Ascending aorta (tissue), 2 donors: ENCODE measurements at regions of chr17 and their contacts with region 1.

Region 1: DNA sequence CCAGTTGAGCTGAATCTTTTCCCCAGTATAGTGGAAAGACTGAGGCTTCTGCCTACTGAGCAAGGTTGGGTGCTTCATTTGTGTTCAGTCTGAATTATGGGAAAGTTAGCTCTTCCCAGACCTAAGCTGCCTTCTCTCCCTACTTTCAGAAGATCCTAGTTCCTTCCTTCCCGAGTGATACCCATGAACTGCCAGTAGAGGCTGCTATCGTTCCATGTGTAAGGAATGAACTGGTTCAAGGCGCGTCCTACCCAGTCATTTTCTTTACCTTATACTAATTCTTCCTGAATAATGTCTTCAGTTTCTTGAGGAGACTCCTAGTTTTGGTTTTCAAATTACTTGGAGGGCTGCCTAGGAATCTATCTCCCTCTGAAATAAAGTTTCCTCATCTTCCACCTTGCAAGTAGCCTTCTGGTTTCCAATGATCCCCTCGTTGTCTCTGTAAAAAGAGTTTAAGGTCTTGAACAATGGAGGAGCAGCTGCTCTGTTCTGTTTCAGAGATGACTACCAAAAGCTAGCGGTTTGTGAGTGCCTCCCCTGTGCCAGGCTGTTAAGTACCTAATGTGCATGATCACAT is 934 bp upstream of the AOC2 start:
- DNase-seq: no peak
- H3K4me3 ChIP-seq: no peak overlapping the region
- H3K27ac ChIP-seq: peak overlapping the region in 1 of 2 donors; percentile 17
- H3K4me1 ChIP-seq: no peaks in the 10 kb centered on the region
- H3K27me3 ChIP-seq: no peaks in the 10 kb centered on the region
- CTCF ChIP-seq: peak; percentile 93 to 96 (median 95)

Region 2: GRCh38 chr17:42779936-42780850 is 63.3 kb before region 1 on chr17 and contains the start of gene WNK4:
- intact Hi-C with region 1: no loop called
- DNase-seq: no peak
- H3K4me3 ChIP-seq: peak within 1 kb of the TSS; percentile 45 to 47
- H3K27ac ChIP-seq: no peak within 1 kb of the TSS
- H3K4me1 ChIP-seq: peaks cover 6% of the 10 kb centered on the region in 2 donors
- H3K27me3 ChIP-seq: peaks cover 12% of the 10 kb centered on the region
- CTCF ChIP-seq: no peak
- total RNA-seq, gene WNK4: not detected

Region 3: DNA sequence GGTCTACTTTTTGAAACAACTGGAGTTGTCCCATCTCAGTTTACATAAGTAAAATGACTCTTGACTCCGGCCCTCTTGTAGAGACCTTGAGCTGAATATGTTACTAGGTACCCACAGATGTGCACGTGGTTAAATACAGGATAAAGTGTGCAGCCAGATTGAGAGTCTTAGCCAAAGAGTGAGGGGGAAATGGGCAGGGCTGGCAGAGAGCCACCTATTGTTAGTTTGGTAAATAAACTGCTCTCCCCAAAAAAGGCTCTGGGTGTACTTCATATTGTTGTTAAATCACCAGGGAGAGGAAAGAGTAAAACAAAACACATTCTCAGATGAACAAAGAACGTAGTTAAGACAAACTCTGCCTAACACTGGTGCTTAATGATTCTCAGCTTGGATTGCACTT is 77.5 kb after region 1 on chr17:
- intact Hi-C with region 1: no loop called
- DNase-seq: no peak
- H3K4me3 ChIP-seq: no peak overlapping the region
- H3K27ac ChIP-seq: no peak overlapping the region
- H3K4me1 ChIP-seq: peaks cover 0 to 9% of the 10 kb centered on the region in 2 donors
- H3K27me3 ChIP-seq: no peaks in the 10 kb centered on the region
- CTCF ChIP-seq: no peak

Region 4: GRCh38 chr17:42937712-42938596 is 94.5 kb after region 1 on chr17:
- intact Hi-C with region 1: loop called (anchors 1 kb)
- DNase-seq: no peak
- H3K4me3 ChIP-seq: no peak overlapping the region
- H3K27ac ChIP-seq: no peak overlapping the region
- H3K4me1 ChIP-seq: no peaks in the 10 kb centered on the region
- H3K27me3 ChIP-seq: no peaks in the 10 kb centered on the region
- CTCF ChIP-seq: peak; percentile 45 to 78 (median 50)